CD8-positive, alpha-beta T cell (primary cell): ENCODE measurements at regions of chrX and their contacts with region 1.

Region 1: GRCh38 chrX:111680988-111681779 is at the start of gene ALG13:
- DNase-seq: peak; percentile 74 to 96 (median 89)
- ATAC-seq: peak; percentile 86
- H3K4me3 ChIP-seq: peak within 1 kb of the TSS; percentile 71 to 98
- H3K4me3 Mint-ChIP-seq: peak within 1 kb of the TSS; percentile 90
- H3K27ac ChIP-seq: peak within 1 kb of the TSS; percentile 99 to 100
- H3K27ac Mint-ChIP-seq: peak within 1 kb of the TSS; percentile 97
- H3K4me1 ChIP-seq: peaks cover 14% of the 10 kb centered on the region
- H3K4me1 Mint-ChIP-seq: peaks cover 29% of the 10 kb centered on the region
- H3K27me3 ChIP-seq: no peaks in the 10 kb centered on the region
- H3K27me3 Mint-ChIP-seq: no peaks in the 10 kb centered on the region
- CTCF ChIP-seq: peak; percentile 49
- total RNA-seq, gene ALG13: 95.3 to 98.9 TPM

Region 2: GRCh38 chrX:110002300-110003166 is 1678.7 kb before region 1 on chrX and contains the start of gene TMEM164:
- CTCF ChIA-PET with region 1: no interaction called
- POLR2A ChIA-PET with region 1: no interaction called
- intact Hi-C with region 1: loop called in 1 of 2 experiments (anchors 10 kb)
- DNase-seq: peak; percentile 60 to 89 (median 79)
- ATAC-seq: peak; percentile 79
- H3K4me3 ChIP-seq: peak within 1 kb of the TSS; percentile 67 to 69
- H3K4me3 Mint-ChIP-seq: peak within 1 kb of the TSS; percentile 89
- H3K27ac ChIP-seq: peak within 1 kb of the TSS; percentile 33 to 67
- H3K27ac Mint-ChIP-seq: peak within 1 kb of the TSS; percentile 92
- H3K4me1 ChIP-seq: peaks cover 9% of the 10 kb centered on the region
- H3K4me1 Mint-ChIP-seq: peaks cover 38% of the 10 kb centered on the region
- H3K27me3 ChIP-seq: no peaks in the 10 kb centered on the region
- H3K27me3 Mint-ChIP-seq: no peaks in the 10 kb centered on the region
- CTCF ChIP-seq: no peak
- total RNA-seq, gene TMEM164: 7.4 to 9.0 TPM

Region 3: DNA sequence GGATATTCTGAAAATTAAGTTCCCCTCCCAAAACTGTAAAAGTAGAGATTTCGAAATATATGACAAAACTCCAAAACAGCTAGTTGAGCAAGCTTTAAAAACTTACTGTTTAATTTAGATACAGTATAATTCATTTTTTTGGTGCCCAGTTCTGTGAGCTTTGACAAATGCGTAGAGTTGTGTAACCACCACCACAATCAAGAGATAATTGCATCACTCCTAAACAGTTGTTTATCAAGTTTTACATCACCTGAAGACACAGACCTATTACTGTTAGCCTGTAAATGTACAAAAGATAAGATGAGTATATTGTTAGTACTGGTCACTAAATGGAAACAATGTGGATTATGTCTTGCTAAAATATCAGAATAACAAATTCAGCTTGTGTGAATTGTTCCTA is 62.1 kb after region 1 on chrX:
- CTCF ChIA-PET with region 1: interaction called, 3 read pairs
- POLR2A ChIA-PET with region 1: no interaction called
- intact Hi-C with region 1: loop called in 1 of 2 experiments (anchors 10 kb)
- DNase-seq: no peak
- ATAC-seq: no peak
- H3K4me3 ChIP-seq: no peak overlapping the region
- H3K4me3 Mint-ChIP-seq: no peak overlapping the region
- H3K27ac ChIP-seq: no peak overlapping the region
- H3K27ac Mint-ChIP-seq: no peak overlapping the region
- H3K4me1 ChIP-seq: no peaks in the 10 kb centered on the region
- H3K4me1 Mint-ChIP-seq: peaks cover 2% of the 10 kb centered on the region
- H3K27me3 ChIP-seq: no peaks in the 10 kb centered on the region
- H3K27me3 Mint-ChIP-seq: no peaks in the 10 kb centered on the region
- CTCF ChIP-seq: no peak

Region 4: DNA sequence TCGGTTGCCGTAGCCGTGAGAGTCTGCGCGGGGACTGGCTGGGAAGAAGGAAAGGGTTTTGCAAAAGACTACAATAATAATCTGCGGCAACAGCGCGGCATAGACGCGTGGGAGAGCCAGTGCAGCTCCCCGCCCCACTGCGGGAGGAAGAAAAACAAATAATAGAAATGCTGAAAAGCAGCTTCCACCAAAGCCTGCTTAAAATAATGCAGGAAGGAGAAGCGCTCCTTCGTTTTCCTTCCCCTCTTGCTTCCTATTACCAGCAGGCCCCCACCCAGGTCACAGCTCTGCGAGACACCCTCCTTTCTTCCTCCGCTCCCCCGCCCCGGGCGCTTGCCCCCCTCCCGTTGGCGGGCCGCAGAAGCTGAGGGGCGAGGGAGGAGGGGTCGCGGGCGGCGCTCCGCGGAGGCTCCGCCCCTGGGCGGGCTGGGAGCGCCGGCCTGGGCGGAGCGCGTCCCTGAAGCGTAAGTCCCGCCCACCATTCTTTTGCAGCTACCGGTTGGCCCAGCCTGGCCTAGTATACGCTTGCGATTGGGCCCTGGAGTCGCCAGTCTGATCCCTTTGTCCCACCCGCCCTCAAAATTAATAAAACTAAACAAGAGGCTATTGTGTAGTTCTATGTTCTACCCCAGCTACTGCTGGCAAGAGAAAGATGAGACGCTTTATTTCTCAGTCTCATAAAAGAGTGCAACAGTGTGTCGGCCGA is 1160.1 kb after region 1 on chrX:
- CTCF ChIA-PET with region 1: no interaction called
- POLR2A ChIA-PET with region 1: interaction called, 8 read pairs
- intact Hi-C with region 1: loop called (anchors 2 to 5 kb)
- DNase-seq: peak; percentile 46 to 89 (median 72)
- ATAC-seq: peak; percentile 96
- H3K4me3 ChIP-seq: peak overlapping the region; percentile 76 to 86
- H3K4me3 Mint-ChIP-seq: peak overlapping the region; percentile 87
- H3K27ac ChIP-seq: peak overlapping the region; percentile 42 to 58
- H3K27ac Mint-ChIP-seq: peak overlapping the region; percentile 86
- H3K4me1 ChIP-seq: peaks cover 5% of the 10 kb centered on the region
- H3K4me1 Mint-ChIP-seq: peaks cover 15% of the 10 kb centered on the region
- H3K27me3 ChIP-seq: no peaks in the 10 kb centered on the region
- H3K27me3 Mint-ChIP-seq: no peaks in the 10 kb centered on the region
- CTCF ChIP-seq: no peak